ENCODE measurements at regions of chr19 and their contacts with region 1.

Region 1: GRCh38 chr19:47790398-47790814 is 11.9 kb downstream of the SELENOW start:
- DNase-seq: peak; percentile 80 to 88
- ATAC-seq: peak; percentile 40 to 81 (median 66)
- H3K4me3 ChIP-seq: no peak overlapping the region
- H3K27ac ChIP-seq: no peak overlapping the region
- H3K4me1 ChIP-seq: peaks cover 0 to 15% (median 0%) of the 10 kb centered on the region in 9 donors
- H3K27me3 ChIP-seq: no peaks in the 10 kb centered on the region
- CTCF ChIP-seq: peak; percentile 73 to 87 (median 84)

Region 2: GRCh38 chr19:47707135-47707925 is 83.1 kb before region 1 on chr19:
- intact Hi-C with region 1: loop called in 6 of 10 experiments (anchors 2 to 5 kb)
- DNase-seq: peak; percentile 58 to 68
- ATAC-seq: peak; percentile 61 to 87 (median 82)
- H3K4me3 ChIP-seq: no peak overlapping the region
- H3K27ac ChIP-seq: no peak overlapping the region
- H3K4me1 ChIP-seq: no peaks in the 10 kb centered on the region
- H3K27me3 ChIP-seq: peaks cover 0 to 12% (median 0%) of the 10 kb centered on the region in 7 donors
- CTCF ChIP-seq: peak; percentile 52 to 84 (median 77)

Region 3: DNA sequence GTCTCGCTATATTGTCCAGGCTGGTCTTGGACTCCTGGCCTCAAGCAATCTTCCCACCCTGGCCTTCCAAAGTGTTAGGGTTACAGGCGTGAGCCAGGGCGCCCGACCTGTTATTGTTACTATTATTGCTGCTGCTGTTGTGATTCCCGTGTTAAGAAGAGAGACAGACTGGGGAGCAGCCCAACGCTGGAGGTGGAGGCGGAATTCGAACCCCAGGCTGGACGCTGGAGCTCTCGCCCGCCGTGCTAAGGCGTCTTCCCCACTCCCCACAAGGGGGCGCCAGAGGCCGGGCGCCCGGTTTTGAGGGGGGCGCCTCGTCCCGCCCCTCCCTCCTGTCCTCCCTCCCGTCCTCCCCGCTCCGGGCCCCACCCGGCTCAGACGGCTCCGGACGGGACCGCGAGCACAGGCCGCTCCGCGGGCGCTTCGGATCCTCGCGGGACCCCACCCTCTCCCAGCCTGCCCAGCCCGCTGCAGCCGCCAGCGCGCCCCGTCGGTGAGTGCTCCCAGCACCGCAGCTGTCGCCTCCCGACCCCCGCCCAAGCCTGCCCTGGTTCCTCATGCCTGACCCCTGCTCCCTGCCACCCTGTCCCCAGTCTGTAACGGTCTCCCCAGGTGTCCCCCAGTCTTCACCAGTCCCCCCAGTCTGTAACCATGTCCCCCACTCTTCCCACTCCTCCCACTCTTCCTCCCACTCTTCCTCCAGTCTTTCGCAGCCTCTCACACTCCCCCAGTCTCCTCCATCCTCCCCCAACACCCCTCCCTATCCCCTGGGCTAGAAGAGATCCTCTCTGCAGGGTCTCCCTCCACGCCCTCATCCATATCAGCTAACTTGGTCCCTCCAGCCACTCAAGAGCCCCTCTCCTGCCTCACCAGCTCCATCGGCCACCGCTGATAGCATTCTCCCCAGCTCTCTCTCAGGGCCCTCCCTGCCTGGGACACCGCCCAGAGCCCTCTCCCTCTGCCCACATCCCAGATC is 77.1 kb before region 1 on chr19 and contains the start of gene EHD2:
- intact Hi-C with region 1: loop called in 7 of 10 experiments (anchors 2 to 5 kb)
- DNase-seq: peak; percentile 76 to 86
- ATAC-seq: peak; percentile 94 to 96 (median 95)
- H3K4me3 ChIP-seq: peak within 1 kb of the TSS; percentile 58 to 79 (median 69)
- H3K27ac ChIP-seq: peak within 1 kb of the TSS; percentile 77 to 95 (median 86)
- H3K4me1 ChIP-seq: peaks cover 19 to 48% (median 33%) of the 10 kb centered on the region in 9 donors
- H3K27me3 ChIP-seq: peaks cover 0 to 34% (median 4%) of the 10 kb centered on the region in 7 donors
- CTCF ChIP-seq: peak; percentile 93 to 98 (median 96)
- total RNA-seq, gene EHD2: 27.5 to 78.2 (median 40.5) TPM

Region 4: DNA sequence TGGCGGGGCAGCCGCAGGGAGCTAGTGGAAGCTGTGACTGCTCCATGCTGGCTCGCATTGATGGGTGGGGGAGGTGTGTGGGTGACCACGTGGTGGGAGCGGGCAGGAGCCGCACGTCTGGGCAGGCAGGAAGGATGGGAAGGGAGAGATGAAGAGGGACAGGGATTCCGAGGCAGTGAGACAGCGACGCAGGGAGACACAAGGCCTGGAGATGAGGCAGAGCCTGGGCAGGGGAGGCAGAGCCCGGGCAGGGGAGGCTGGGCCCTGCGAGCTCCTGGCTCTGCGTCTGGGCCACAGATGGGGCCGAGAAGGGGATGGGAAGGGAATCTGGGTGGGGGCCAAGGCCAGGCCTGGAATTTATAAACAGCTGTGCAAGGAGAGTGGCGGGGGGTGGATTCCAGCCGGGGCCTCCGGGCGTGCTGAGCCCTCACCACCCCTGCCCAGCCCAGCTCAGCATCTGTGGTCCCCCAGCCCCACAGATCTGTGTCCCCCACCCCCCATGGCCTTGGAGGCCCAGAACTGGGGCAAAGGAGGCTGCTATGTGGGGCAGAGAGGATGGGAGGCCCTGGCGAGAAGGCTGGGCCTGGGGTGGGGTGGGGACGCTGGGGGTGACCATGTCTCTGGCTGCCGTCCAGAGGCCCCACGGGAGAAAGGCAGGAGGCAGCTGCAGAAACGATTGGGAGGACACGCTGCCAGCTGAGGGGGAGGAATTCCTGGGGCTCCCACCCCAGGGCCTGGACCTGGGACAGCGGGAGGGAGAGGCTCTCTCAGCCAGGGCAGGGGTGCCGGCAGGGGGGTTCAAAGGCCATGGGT is 71.2 kb before region 1 on chr19:
- intact Hi-C with region 1: loop called in 5 of 10 experiments (anchors 5 kb)
- DNase-seq: peak; percentile 91 to 92
- ATAC-seq: peak; percentile 79 to 89 (median 86)
- H3K4me3 ChIP-seq: peak overlapping the region in 8 of 10 donors; percentile 6 to 69 (median 32)
- H3K27ac ChIP-seq: peak overlapping the region; percentile 69 to 92 (median 82)
- H3K4me1 ChIP-seq: peaks cover 25 to 96% (median 67%) of the 10 kb centered on the region in 9 donors
- H3K27me3 ChIP-seq: peaks cover 0 to 12% (median 0%) of the 10 kb centered on the region in 7 donors
- CTCF ChIP-seq: no peak

Region 5: GRCh38 chr19:47765523-47766358 is 24.7 kb before region 1 on chr19:
- intact Hi-C with region 1: loop called in 8 of 10 experiments (anchors 1 to 2 kb)
- DNase-seq: peak; percentile 57 to 80
- ATAC-seq: peak; percentile 76 to 84 (median 79)
- H3K4me3 ChIP-seq: no peak overlapping the region
- H3K27ac ChIP-seq: no peak overlapping the region
- H3K4me1 ChIP-seq: peaks cover 0 to 24% (median 4%) of the 10 kb centered on the region in 9 donors
- H3K27me3 ChIP-seq: no peaks in the 10 kb centered on the region
- CTCF ChIP-seq: peak; percentile 67 to 91 (median 84)

Region 6: GRCh38 chr19:47863514-47863936 is 73.1 kb after region 1 on chr19:
- intact Hi-C with region 1: loop called in 1 of 10 experiments (anchors 10 kb)
- DNase-seq: peak; percentile 84 to 89
- ATAC-seq: peak; percentile 87 to 95 (median 92)
- H3K4me3 ChIP-seq: no peak overlapping the region
- H3K27ac ChIP-seq: no peak overlapping the region
- H3K4me1 ChIP-seq: no peaks in the 10 kb centered on the region
- H3K27me3 ChIP-seq: peaks cover 0 to 25% (median 4%) of the 10 kb centered on the region in 7 donors
- CTCF ChIP-seq: peak; percentile 80 to 98 (median 95)